ENCODE measurements at regions of chr16 and their contacts with region 1.

Region 1: GRCh38 chr16:4244254-4245076 is 2.6 kb upstream of the SRL start:
- DNase-seq: no peak
- ATAC-seq: no peak
- H3K4me3 ChIP-seq: no peak overlapping the region
- H3K27ac ChIP-seq: no peak overlapping the region
- H3K4me1 ChIP-seq: peaks cover 5 to 14% of the 10 kb centered on the region in 2 donors
- H3K27me3 ChIP-seq: no peaks in the 10 kb centered on the region
- CTCF ChIP-seq: no peak
- POLR2A ChIP-seq: no peak

Region 2: GRCh38 chr16:4208341-4208751 is 36.1 kb before region 1 on chr16:
- in situ Hi-C with region 1: no loop called
- intact Hi-C with region 1: loop called (anchors 5 kb)
- DNase-seq: peak; percentile 47 to 73
- ATAC-seq: peak; percentile 37 to 40
- H3K4me3 ChIP-seq: peak overlapping the region in 3 of 4 donors; percentile 23 to 32 (median 30)
- H3K27ac ChIP-seq: peak overlapping the region; percentile 91 to 100 (median 98)
- H3K4me1 ChIP-seq: peaks cover 77 to 80% of the 10 kb centered on the region in 2 donors
- H3K27me3 ChIP-seq: no peaks in the 10 kb centered on the region
- CTCF ChIP-seq: no peak
- POLR2A ChIP-seq: peak; percentile 13 to 59